ENCODE measurements at regions of chr7 and their contacts with region 1.

Region 1: GRCh38 chr7:85041605-85042216 is 145.1 kb downstream of the SEMA3D start:
- DNase-seq: peak; percentile 55
- ATAC-seq: peak; percentile 96
- H3K4me3 ChIP-seq: no peak overlapping the region
- H3K27ac ChIP-seq: no peak overlapping the region
- H3K4me1 ChIP-seq: no peaks in the 10 kb centered on the region
- H3K27me3 ChIP-seq: no peaks in the 10 kb centered on the region
- CTCF ChIP-seq: peak; percentile 83
- EP300 ChIP-seq: no peak
- POLR2A ChIP-seq: no peak
- RAD21 ChIP-seq: peak; percentile 70

Region 2: GRCh38 chr7:85456254-85456653 is 414.5 kb after region 1 on chr7:
- CTCF ChIA-PET with region 1: no interaction called
- POLR2A ChIA-PET with region 1: no interaction called
- in situ Hi-C with region 1: loop called (anchors 10 kb)
- intact Hi-C with region 1: loop called (anchors 1 kb)
- DNase-seq: no peak
- ATAC-seq: 0 out of 3 replicates have a peak, but pooled peaks have one; percentile 47
- H3K4me3 ChIP-seq: no peak overlapping the region
- H3K27ac ChIP-seq: no peak overlapping the region
- H3K4me1 ChIP-seq: no peaks in the 10 kb centered on the region
- H3K27me3 ChIP-seq: no peaks in the 10 kb centered on the region
- CTCF ChIP-seq: peak; percentile 55
- EP300 ChIP-seq: no peak
- POLR2A ChIP-seq: no peak
- RAD21 ChIP-seq: no peak

Region 3: DNA sequence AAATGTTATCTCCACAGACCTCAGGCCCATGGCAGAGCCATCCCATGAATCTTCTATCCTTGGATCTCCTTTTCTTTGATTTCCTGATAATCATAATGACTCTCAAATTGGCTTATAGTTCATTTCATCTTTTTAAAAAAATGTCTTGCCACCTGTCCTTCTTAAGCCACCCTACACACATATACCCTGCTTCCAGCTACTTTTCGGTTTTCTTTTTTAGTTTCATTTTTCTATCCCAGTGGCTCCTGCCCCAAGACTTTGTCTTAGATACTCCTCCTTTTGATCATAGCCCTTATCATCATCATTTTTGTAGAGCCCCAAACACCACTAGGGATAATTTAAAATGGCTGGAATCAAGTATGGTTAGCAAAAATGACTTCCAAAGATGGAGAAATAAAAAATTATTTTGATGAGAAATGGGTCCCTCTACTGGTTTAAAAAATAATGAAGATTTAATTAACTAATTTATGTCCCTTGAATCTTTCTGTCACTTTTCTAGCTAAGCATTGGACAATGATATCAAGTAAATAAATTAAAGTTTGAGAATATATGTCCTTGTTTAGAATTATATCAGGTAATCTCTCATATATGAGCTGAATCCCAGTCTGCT is 422.4 kb after region 1 on chr7:
- CTCF ChIA-PET with region 1: interaction called, 7 read pairs
- POLR2A ChIA-PET with region 1: no interaction called
- in situ Hi-C with region 1: loop called (anchors 10 kb)
- intact Hi-C with region 1: loop called (anchors 2 kb)
- DNase-seq: no peak
- ATAC-seq: no peak
- H3K4me3 ChIP-seq: no peak overlapping the region
- H3K27ac ChIP-seq: no peak overlapping the region
- H3K4me1 ChIP-seq: no peaks in the 10 kb centered on the region
- H3K27me3 ChIP-seq: no peaks in the 10 kb centered on the region
- CTCF ChIP-seq: 0 out of 2 replicates have a peak, but pooled peaks have one; percentile 6
- EP300 ChIP-seq: no peak
- POLR2A ChIP-seq: no peak
- RAD21 ChIP-seq: no peak

Region 4: DNA sequence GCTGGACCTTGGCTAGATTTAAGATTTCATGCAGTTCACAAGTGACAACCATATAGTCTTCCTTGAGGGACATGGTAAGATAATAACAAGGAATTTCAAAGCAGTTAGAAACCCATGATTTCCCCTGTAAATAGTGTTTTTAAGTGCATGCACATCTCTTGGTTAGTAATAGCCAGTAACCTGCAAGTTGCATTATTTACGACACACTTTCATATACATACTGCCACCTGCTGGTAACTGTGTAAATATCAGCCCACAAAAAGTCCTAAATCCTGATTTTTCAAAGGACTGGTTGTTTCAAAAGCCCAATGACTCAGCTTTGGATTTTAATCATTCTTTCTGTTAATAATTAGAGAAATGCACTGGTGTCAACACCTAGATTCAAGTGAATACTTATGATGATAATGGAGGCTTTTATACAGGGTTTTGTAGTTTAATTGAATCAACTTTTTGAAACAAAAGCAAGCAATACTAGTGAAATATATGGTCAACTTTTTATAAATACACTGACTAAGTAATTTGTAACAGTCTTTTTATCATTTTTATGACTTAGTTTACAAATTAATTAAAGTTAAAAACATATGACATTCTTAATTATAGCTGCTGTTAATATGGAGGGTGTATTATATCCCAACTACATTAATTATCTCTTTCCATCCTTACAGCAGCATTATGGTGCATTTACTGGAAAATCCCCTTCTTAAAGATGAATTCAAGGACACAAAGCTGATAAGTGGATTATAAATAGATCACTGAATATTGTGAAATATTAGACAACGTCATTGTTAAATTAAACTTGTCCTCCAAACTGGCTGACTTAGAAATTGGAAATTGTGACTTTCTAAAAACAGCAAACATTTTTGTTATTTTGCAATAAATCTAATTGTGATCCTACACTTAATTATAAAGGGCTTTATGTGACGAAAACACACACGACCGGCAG is 512.8 kb after region 1 on chr7:
- CTCF ChIA-PET with region 1: interaction called, 30 read pairs
- POLR2A ChIA-PET with region 1: no interaction called
- in situ Hi-C with region 1: loop called (anchors 10 kb)
- intact Hi-C with region 1: loop called (anchors 1 kb)
- DNase-seq: peak; percentile 59
- ATAC-seq: peak; percentile 72
- H3K4me3 ChIP-seq: no peak overlapping the region
- H3K27ac ChIP-seq: no peak overlapping the region
- H3K4me1 ChIP-seq: no peaks in the 10 kb centered on the region
- H3K27me3 ChIP-seq: no peaks in the 10 kb centered on the region
- CTCF ChIP-seq: peak; percentile 75
- EP300 ChIP-seq: no peak
- POLR2A ChIP-seq: no peak
- RAD21 ChIP-seq: peak; percentile 57; the same call in 1 of the 2 replicates

Region 5: DNA sequence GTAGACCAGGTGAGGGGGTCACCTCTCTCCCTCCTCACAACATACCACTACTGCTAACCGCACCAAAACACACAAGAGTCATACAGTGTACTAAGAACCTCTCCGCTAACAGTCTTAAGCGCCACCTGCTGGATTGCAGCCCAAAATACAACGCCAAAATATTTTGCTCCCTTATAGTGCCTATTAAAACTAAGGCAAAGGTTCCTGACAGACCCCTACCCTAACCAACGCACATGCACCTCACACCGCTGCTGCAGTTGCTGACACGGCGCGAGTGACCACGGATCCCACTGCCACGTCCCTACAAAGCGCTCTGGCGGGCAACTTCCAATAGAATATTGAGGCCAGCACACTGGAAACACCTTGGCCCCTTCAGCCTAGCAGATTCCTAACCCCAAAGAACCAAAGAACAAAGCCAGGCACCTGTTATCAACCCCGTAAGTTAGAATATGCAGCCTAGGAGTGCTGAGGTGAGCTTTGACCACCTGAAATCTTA is 708.8 kb after region 1 on chr7:
- CTCF ChIA-PET with region 1: interaction called, 17 read pairs
- POLR2A ChIA-PET with region 1: no interaction called
- in situ Hi-C with region 1: loop called (anchors 10 kb)
- intact Hi-C with region 1: loop called (anchors 1 kb)
- DNase-seq: peak; percentile 36
- ATAC-seq: peak; percentile 97
- H3K4me3 ChIP-seq: no peak overlapping the region
- H3K27ac ChIP-seq: no peak overlapping the region
- H3K4me1 ChIP-seq: no peaks in the 10 kb centered on the region
- H3K27me3 ChIP-seq: no peaks in the 10 kb centered on the region
- CTCF ChIP-seq: peak; percentile 77
- EP300 ChIP-seq: no peak
- POLR2A ChIP-seq: no peak
- RAD21 ChIP-seq: peak; percentile 35; the same call in 1 of the 2 replicates

Region 6: DNA sequence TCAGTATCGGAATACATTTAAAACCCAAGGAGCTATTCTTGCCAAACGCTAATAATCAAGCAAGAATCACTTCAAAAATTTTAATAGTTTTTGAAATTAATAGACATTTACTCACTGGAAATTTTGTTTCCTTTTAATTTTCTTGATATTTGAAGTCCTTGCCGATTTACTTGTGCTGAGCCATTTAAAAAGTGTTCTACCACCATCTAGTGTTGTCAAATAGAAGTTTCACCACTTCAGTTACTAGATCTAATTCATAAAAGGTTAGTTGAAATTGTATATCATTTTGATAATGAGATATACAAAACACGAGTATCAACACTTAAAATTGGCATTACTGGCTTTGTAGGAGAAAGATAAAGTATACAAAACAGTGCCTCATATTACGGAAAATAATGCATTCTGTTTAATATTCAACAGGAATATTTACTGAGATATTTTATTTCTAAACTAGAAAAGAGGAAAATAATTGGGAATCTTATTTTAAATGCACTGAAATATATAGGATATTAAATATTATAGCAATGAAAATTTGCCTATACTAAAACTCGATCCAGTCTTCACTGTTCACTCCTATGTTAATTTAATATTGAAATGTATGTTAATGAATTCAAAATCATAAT is 810.0 kb after region 1 on chr7:
- CTCF ChIA-PET with region 1: interaction called, 3 read pairs
- POLR2A ChIA-PET with region 1: no interaction called
- in situ Hi-C with region 1: loop called (anchors 10 kb)
- intact Hi-C with region 1: loop called (anchors 2 kb)
- DNase-seq: peak; percentile 16
- ATAC-seq: no peak
- H3K4me3 ChIP-seq: no peak overlapping the region
- H3K27ac ChIP-seq: no peak overlapping the region
- H3K4me1 ChIP-seq: no peaks in the 10 kb centered on the region
- H3K27me3 ChIP-seq: no peaks in the 10 kb centered on the region
- CTCF ChIP-seq: peak; percentile 41
- EP300 ChIP-seq: no peak
- POLR2A ChIP-seq: no peak
- RAD21 ChIP-seq: no peak

Region 7: GRCh38 chr7:86469680-86470295 is 1428.1 kb after region 1 on chr7:
- CTCF ChIA-PET with region 1: interaction called, 3 read pairs
- POLR2A ChIA-PET with region 1: no interaction called
- in situ Hi-C with region 1: no loop called
- intact Hi-C with region 1: loop called (anchors 2 kb)
- DNase-seq: peak; percentile 70
- ATAC-seq: peak; percentile 95
- H3K4me3 ChIP-seq: no peak overlapping the region
- H3K27ac ChIP-seq: no peak overlapping the region
- H3K4me1 ChIP-seq: no peaks in the 10 kb centered on the region
- H3K27me3 ChIP-seq: no peaks in the 10 kb centered on the region
- CTCF ChIP-seq: peak; percentile 87
- EP300 ChIP-seq: no peak
- POLR2A ChIP-seq: no peak
- RAD21 ChIP-seq: peak; percentile 63